GM10248 (cell line): ENCODE measurements at regions of chr7 and their contacts with region 1.

Region 1: GRCh38 chr7:149598721-149599306 is 101.2 kb upstream of the ZNF746 start:
- DNase-seq: peak; percentile 44
- CTCF ChIP-seq: peak; percentile 52

Region 2: GRCh38 chr7:149586646-149587332 is 12.0 kb before region 1 on chr7:
- CTCF ChIA-PET with region 1: interaction called, 13 read pairs
- POLR2A ChIA-PET with region 1: no interaction called
- DNase-seq: no peak
- CTCF ChIP-seq: no peak

Region 3: GRCh38 chr7:149720372-149721248 is 121.8 kb after region 1 on chr7:
- CTCF ChIA-PET with region 1: no interaction called
- POLR2A ChIA-PET with region 1: no interaction called
- DNase-seq: peak; percentile 51
- CTCF ChIP-seq: no peak